ENCODE measurements at regions of chr10 and their contacts with region 1.

Region 1: GRCh38 chr10:124530215-124530665 is 68.6 kb downstream of the LHPP start:
- DNase-seq: peak; percentile 93
- ATAC-seq: peak; percentile 86
- H3K4me3 ChIP-seq: no peak overlapping the region
- H3K4me3 Mint-ChIP-seq: peak overlapping the region; percentile 74
- H3K27ac ChIP-seq: no peak overlapping the region
- H3K27ac Mint-ChIP-seq: peak overlapping the region; percentile 92
- H3K4me1 ChIP-seq: peaks cover 37 to 53% of the 10 kb centered on the region in 2 donors
- H3K4me1 Mint-ChIP-seq: peaks cover 50% of the 10 kb centered on the region
- H3K27me3 ChIP-seq: no peaks in the 10 kb centered on the region
- H3K27me3 Mint-ChIP-seq: no peaks in the 10 kb centered on the region
- CTCF ChIP-seq: peak; percentile 86

Region 2: DNA sequence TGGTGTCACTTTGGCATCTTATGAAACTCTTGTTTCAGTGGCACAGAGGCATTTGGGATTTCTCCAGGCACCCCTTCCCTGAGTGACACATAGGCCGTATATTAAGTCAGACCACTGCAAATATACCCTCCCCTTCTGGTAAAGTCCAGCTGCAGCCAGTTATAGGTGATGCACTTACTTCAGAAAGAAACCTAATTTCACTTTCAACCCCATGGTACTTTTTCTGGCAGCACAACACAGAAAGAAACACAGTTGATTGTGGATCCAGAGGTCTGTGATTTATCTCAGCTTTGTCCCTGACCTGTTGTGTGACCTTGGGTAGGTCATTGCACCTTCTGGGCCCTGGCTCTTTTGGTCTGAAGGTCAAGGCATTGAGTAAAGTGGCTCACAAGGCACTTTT is 1202.8 kb before region 1 on chr10:
- CTCF ChIA-PET with region 1: no interaction called
- POLR2A ChIA-PET with region 1: no interaction called
- intact Hi-C with region 1: no loop called
- DNase-seq: no peak
- ATAC-seq: no peak
- H3K4me3 ChIP-seq: no peak overlapping the region
- H3K4me3 Mint-ChIP-seq: no peak overlapping the region
- H3K27ac ChIP-seq: no peak overlapping the region
- H3K27ac Mint-ChIP-seq: no peak overlapping the region
- H3K4me1 ChIP-seq: no peaks in the 10 kb centered on the region
- H3K4me1 Mint-ChIP-seq: no peaks in the 10 kb centered on the region
- H3K27me3 ChIP-seq: peaks cover 0 to 8% (median 0%) of the 10 kb centered on the region in 4 experiments
- H3K27me3 Mint-ChIP-seq: peaks cover 32% of the 10 kb centered on the region
- CTCF ChIP-seq: no peak

Region 3: GRCh38 chr10:124418726-124419501 is 111.3 kb before region 1 on chr10 and contains the start of gene OAT:
- CTCF ChIA-PET with region 1: no interaction called
- POLR2A ChIA-PET with region 1: no interaction called
- intact Hi-C with region 1: loop called (anchors 10 kb)
- DNase-seq: peak; percentile 98
- ATAC-seq: peak; percentile 97
- H3K4me3 ChIP-seq: peak within 1 kb of the TSS; percentile 26 to 83 (median 64)
- H3K4me3 Mint-ChIP-seq: peak within 1 kb of the TSS; percentile 85
- H3K27ac ChIP-seq: peak within 1 kb of the TSS; percentile 51 to 80
- H3K27ac Mint-ChIP-seq: peak within 1 kb of the TSS; percentile 84
- H3K4me1 ChIP-seq: peaks cover 10 to 13% of the 10 kb centered on the region in 2 donors
- H3K4me1 Mint-ChIP-seq: peaks cover 16% of the 10 kb centered on the region
- H3K27me3 ChIP-seq: peaks cover 0 to 23% (median 5%) of the 10 kb centered on the region in 4 experiments
- H3K27me3 Mint-ChIP-seq: peaks cover 16% of the 10 kb centered on the region
- CTCF ChIP-seq: no peak
- total RNA-seq, gene OAT: 16.9 and 20.1 TPM in 2 replicates

Region 4: GRCh38 chr10:124601431-124602120 is 71.3 kb after region 1 on chr10:
- CTCF ChIA-PET with region 1: interaction called, 22 read pairs
- POLR2A ChIA-PET with region 1: interaction called, 17 read pairs
- intact Hi-C with region 1: loop called (anchors 1 kb)
- DNase-seq: peak; percentile 96
- ATAC-seq: peak; percentile 85
- H3K4me3 ChIP-seq: peak overlapping the region in 2 of 5 experiments; percentile 5 to 18
- H3K4me3 Mint-ChIP-seq: peak overlapping the region; percentile 52
- H3K27ac ChIP-seq: peak overlapping the region; percentile 90 to 99
- H3K27ac Mint-ChIP-seq: peak overlapping the region; percentile 99
- H3K4me1 ChIP-seq: peaks cover 98 to 100% of the 10 kb centered on the region in 2 donors
- H3K4me1 Mint-ChIP-seq: peaks cover 94% of the 10 kb centered on the region
- H3K27me3 ChIP-seq: no peaks in the 10 kb centered on the region
- H3K27me3 Mint-ChIP-seq: no peaks in the 10 kb centered on the region
- CTCF ChIP-seq: no peak

Region 5: GRCh38 chr10:124626759-124627380 is 96.6 kb after region 1 on chr10:
- CTCF ChIA-PET with region 1: interaction called, 100 read pairs
- POLR2A ChIA-PET with region 1: interaction called, 6 read pairs
- intact Hi-C with region 1: no loop called
- DNase-seq: peak; percentile 82
- ATAC-seq: peak; percentile 81
- H3K4me3 ChIP-seq: peak overlapping the region in 1 of 5 experiments; percentile 30
- H3K4me3 Mint-ChIP-seq: peak overlapping the region; percentile 62
- H3K27ac ChIP-seq: peak overlapping the region; percentile 83 to 97
- H3K27ac Mint-ChIP-seq: peak overlapping the region; percentile 99
- H3K4me1 ChIP-seq: peaks cover 100% of the 10 kb centered on the region in 2 donors
- H3K4me1 Mint-ChIP-seq: peaks cover 94% of the 10 kb centered on the region
- H3K27me3 ChIP-seq: no peaks in the 10 kb centered on the region
- H3K27me3 Mint-ChIP-seq: no peaks in the 10 kb centered on the region
- CTCF ChIP-seq: peak; percentile 16

Region 6: GRCh38 chr10:124688889-124689670 is 158.8 kb after region 1 on chr10:
- CTCF ChIA-PET with region 1: interaction called, 12 read pairs
- POLR2A ChIA-PET with region 1: no interaction called
- intact Hi-C with region 1: no loop called
- DNase-seq: no peak
- ATAC-seq: no peak
- H3K4me3 ChIP-seq: no peak overlapping the region
- H3K4me3 Mint-ChIP-seq: no peak overlapping the region
- H3K27ac ChIP-seq: peak overlapping the region in 1 of 2 donors; percentile 76
- H3K27ac Mint-ChIP-seq: peak overlapping the region; percentile 79
- H3K4me1 ChIP-seq: peaks cover 65 to 76% of the 10 kb centered on the region in 2 donors
- H3K4me1 Mint-ChIP-seq: peaks cover 77% of the 10 kb centered on the region
- H3K27me3 ChIP-seq: no peaks in the 10 kb centered on the region
- H3K27me3 Mint-ChIP-seq: no peaks in the 10 kb centered on the region
- CTCF ChIP-seq: no peak

Region 7: GRCh38 chr10:124827474-124827873 is 297.2 kb after region 1 on chr10:
- CTCF ChIA-PET with region 1: interaction called, 58 read pairs
- POLR2A ChIA-PET with region 1: interaction called, 3 read pairs
- intact Hi-C with region 1: loop called (anchors 1 kb)
- DNase-seq: peak; percentile 30
- ATAC-seq: no peak
- H3K4me3 ChIP-seq: no peak overlapping the region
- H3K4me3 Mint-ChIP-seq: no peak overlapping the region
- H3K27ac ChIP-seq: no peak overlapping the region
- H3K27ac Mint-ChIP-seq: no peak overlapping the region
- H3K4me1 ChIP-seq: no peaks in the 10 kb centered on the region
- H3K4me1 Mint-ChIP-seq: no peaks in the 10 kb centered on the region
- H3K27me3 ChIP-seq: no peaks in the 10 kb centered on the region
- H3K27me3 Mint-ChIP-seq: no peaks in the 10 kb centered on the region
- CTCF ChIP-seq: peak; percentile 81

Measured in B cell (primary cell).